ENCODE measurements at regions of chr14 and their contacts with region 1.

Region 1: DNA sequence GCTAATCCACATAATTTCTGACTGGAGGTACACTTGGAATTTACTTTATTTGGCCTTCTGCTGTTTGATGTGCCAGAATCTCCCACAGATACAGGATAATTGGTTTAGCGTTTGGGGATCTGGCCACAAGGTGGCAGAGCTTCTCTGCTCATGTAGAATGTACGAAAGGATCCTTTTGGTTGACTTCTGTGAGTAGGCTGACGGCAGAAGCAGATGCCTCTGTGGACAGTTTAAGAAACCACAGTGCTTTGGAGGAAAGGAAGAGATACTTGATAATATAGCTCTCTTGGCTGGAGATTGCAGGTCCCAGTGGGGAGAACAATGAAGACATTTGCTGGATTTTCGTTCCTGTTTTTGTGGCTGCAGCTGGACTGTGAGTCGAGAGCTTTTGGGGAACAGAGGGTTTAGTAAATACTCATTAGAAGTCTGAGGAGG is 75.3 kb upstream of the OR4E1 start:
- DNase-seq: peak; percentile 75
- ATAC-seq: peak; percentile 91
- H3K4me3 Mint-ChIP-seq: peak overlapping the region; percentile 52
- H3K27ac Mint-ChIP-seq: peak overlapping the region; percentile 71
- H3K4me1 Mint-ChIP-seq: peaks cover 9% of the 10 kb centered on the region
- H3K27me3 Mint-ChIP-seq: no peaks in the 10 kb centered on the region

Region 2: DNA sequence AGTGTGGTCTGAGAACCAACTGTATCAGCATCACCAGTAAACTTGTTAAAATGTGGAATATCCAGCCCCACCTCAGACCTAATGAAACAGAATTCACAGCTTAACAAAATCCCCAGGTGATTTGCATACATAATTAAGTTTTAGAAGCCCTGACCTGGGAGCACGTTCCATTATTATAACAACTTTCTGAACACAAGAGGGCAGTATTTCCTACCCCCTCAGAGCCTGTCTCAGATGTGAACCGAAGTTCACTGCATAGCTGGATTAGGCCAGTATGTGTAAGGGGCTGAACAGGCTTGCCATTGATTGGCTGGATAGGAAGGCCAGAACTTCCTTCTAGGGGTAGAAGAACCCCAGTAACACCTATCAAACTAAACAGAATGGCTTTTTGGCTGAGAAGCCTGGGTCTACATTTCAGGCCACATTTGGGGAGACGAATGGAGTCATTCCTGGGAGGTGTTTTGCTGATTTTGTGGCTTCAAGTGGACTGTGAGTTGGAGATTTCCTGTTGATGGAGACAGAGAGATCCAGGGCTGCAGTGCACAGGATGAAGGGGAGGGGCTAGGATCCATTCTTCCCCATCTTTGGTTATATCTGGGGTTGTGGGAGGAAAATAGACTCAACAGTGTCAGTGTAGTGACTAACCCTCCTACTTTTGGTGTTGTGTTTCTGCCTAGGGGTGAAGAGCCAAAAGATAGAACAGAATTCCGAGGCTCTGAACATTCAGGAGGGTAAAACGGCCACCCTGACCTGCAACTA is 19.4 kb after region 1 on chr14:
- CTCF ChIA-PET with region 1: interaction called, 13 read pairs
- POLR2A ChIA-PET with region 1: no interaction called
- intact Hi-C with region 1: no loop called
- DNase-seq: peak; percentile 28
- ATAC-seq: peak; percentile 95
- H3K4me3 Mint-ChIP-seq: peak overlapping the region; percentile 65
- H3K27ac Mint-ChIP-seq: peak overlapping the region; percentile 55
- H3K4me1 Mint-ChIP-seq: peaks cover 9% of the 10 kb centered on the region
- H3K27me3 Mint-ChIP-seq: peaks cover 7% of the 10 kb centered on the region

Region 3: DNA sequence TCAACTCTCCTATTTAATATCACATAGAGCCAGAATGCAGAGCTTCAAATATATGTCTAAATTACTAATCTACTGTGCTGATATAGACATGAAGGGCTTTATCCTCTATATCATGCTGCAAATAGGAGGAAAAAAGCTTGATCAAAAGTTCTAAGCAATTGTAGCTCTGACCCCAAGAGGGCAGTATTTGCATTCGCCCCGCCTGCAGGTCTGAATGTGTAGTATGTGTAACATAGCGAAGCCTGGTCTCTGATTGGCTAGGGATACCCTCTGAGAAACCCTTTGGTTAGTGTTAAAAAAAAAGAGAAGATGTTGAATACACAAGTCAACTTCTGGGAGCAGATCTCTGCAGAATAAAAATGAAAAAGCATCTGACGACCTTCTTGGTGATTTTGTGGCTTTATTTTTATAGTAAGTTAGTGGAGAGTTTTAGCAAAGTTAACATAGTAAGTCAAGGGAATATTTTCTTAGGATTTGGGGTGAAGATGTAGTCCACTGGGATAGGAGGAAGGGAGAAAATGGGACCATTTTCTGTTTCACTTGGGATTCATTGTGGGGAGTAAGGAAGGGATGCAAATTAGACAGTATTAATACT is 76.4 kb after region 1 on chr14:
- CTCF ChIA-PET with region 1: interaction called, 10 read pairs
- POLR2A ChIA-PET with region 1: no interaction called
- intact Hi-C with region 1: no loop called
- DNase-seq: peak; percentile 73
- ATAC-seq: peak; percentile 99
- H3K4me3 Mint-ChIP-seq: peak overlapping the region; percentile 52
- H3K27ac Mint-ChIP-seq: peak overlapping the region; percentile 3
- H3K4me1 Mint-ChIP-seq: peaks cover 8% of the 10 kb centered on the region
- H3K27me3 Mint-ChIP-seq: peaks cover 22% of the 10 kb centered on the region

Measured in activated CD4-positive, alpha-beta T cell treated with anti-CD3 and anti-CD28 coated beads for 36 hours (primary cell).